B cell (primary cell): ENCODE measurements at regions of chr1 and their contacts with region 1.

Region 1: DNA sequence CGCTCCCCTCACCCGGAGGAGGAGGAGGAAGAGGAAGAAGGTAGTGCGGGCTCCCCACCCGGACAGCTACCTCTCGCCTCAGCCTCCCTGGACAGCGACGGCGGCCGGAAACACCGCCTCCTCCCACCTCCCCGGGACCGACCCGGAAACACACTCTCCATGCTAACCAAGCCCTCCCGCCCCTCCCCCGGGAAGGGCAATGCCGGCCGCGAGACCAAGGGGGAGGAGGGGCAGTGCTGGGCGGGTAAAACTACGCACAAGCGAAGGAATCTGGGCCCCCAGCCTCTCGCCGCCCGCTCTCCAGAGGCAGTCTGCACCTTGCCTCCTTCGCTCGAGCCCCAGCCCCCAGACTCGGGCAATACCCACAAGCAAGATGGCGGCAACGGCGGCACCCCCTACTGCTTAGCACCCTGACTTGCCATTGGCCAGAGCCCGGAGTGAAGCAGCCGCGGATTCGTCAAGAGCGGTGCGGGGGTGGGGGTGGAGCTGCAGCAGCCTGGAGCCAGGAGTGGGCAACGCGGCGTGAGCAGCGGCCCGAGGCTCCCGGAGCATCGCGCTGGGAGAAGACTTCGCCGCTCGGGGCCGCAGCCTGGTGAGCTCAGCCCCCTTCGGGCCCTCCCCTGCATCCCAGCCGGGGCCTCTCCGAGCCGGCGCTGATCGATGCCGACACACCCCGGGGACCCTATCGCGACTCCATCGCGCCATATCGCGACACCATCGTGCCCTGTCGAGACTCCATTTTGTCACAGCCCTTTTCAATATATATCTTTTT is at the starts of genes KIAA0319L and NCDN:
- DNase-seq: peak; percentile 96
- ATAC-seq: peak; percentile 92
- H3K4me3 ChIP-seq: peak within 1 kb of the TSS; percentile 82 to 94 (median 90)
- H3K4me3 Mint-ChIP-seq: peak within 1 kb of the TSS; percentile 98
- H3K27ac ChIP-seq: peak within 1 kb of the TSS; percentile 68 to 82
- H3K27ac Mint-ChIP-seq: peak within 1 kb of the TSS; percentile 99
- H3K4me1 ChIP-seq: peaks cover 15 to 26% of the 10 kb centered on the region in 2 donors
- H3K4me1 Mint-ChIP-seq: peaks cover 41% of the 10 kb centered on the region
- H3K27me3 ChIP-seq: no peaks in the 10 kb centered on the region
- H3K27me3 Mint-ChIP-seq: no peaks in the 10 kb centered on the region
- CTCF ChIP-seq: no peak
- total RNA-seq, gene KIAA0319L: 78.1 and 89.9 TPM in 2 replicates
- total RNA-seq, gene NCDN: 19.8 and 22.6 TPM in 2 replicates

Region 2: GRCh38 chr1:34852677-34853217 is 704.7 kb before region 1 on chr1:
- CTCF ChIA-PET with region 1: interaction called, 4 read pairs
- POLR2A ChIA-PET with region 1: no interaction called
- intact Hi-C with region 1: loop called (anchors 10 kb)
- DNase-seq: peak; percentile 89
- ATAC-seq: peak; percentile 100
- H3K4me3 ChIP-seq: no peak overlapping the region
- H3K4me3 Mint-ChIP-seq: no peak overlapping the region
- H3K27ac ChIP-seq: no peak overlapping the region
- H3K27ac Mint-ChIP-seq: peak overlapping the region; percentile 41
- H3K4me1 ChIP-seq: peaks cover under 1 to 6% of the 10 kb centered on the region in 2 donors
- H3K4me1 Mint-ChIP-seq: peaks cover 16% of the 10 kb centered on the region
- H3K27me3 ChIP-seq: no peaks in the 10 kb centered on the region
- H3K27me3 Mint-ChIP-seq: no peaks in the 10 kb centered on the region
- CTCF ChIP-seq: peak; percentile 92

Region 3: DNA sequence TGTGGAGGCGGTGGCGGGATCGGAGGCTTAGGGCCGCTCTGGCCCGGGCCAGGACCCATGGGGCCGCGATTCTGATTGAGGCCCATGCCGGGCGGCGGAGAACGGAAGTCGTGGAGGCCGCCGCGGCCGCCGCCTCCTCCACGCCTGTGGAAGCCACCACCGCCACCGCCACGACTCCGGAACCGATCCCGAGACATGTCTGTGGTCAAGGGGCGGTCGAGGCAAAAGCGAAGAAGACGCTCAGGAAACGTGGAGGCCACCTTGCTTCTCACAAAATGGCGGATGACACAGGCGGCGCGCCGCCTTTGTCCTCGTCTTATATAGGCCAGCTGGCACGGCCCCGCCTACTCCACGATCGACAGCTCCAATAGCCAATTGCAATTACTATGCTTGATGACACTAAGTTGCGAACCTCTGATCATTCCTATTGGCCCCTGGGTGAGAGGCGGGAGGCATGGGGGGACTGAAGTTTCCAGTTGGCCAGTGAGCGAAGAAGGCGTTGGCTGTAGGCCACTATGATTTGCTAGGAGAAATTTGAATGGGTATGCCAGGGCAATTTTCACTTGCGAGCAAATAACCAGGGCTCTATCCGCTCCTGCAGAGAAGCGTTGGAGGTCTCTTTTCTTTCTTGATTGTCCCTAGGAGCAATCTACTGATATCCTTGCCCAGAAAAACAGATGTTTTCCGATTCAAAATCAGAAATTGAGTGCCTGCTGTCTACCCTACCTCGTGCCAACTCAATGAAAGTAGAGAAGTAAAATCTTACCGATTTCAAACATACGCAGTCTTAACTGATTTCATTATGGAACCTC is 364.4 kb before region 1 on chr1 and contains the start of gene SFPQ:
- CTCF ChIA-PET with region 1: no interaction called
- POLR2A ChIA-PET with region 1: interaction called, 3 read pairs
- intact Hi-C with region 1: loop called (anchors 1 kb)
- DNase-seq: peak; percentile 99
- ATAC-seq: peak; percentile 91
- H3K4me3 ChIP-seq: peak within 1 kb of the TSS; percentile 75 to 97 (median 88)
- H3K4me3 Mint-ChIP-seq: peak within 1 kb of the TSS; percentile 97
- H3K27ac ChIP-seq: peak within 1 kb of the TSS; percentile 95 to 96
- H3K27ac Mint-ChIP-seq: peak within 1 kb of the TSS; percentile 100
- H3K4me1 ChIP-seq: peaks cover 24 to 29% of the 10 kb centered on the region in 2 donors
- H3K4me1 Mint-ChIP-seq: peaks cover 43% of the 10 kb centered on the region
- H3K27me3 ChIP-seq: no peaks in the 10 kb centered on the region
- H3K27me3 Mint-ChIP-seq: no peaks in the 10 kb centered on the region
- CTCF ChIP-seq: no peak
- total RNA-seq, gene SFPQ: 411 and 412 TPM in 2 replicates

Region 4: GRCh38 chr1:35641233-35641866 is 83.9 kb after region 1 on chr1 and contains the start of gene PSMB2:
- CTCF ChIA-PET with region 1: no interaction called
- POLR2A ChIA-PET with region 1: no interaction called
- intact Hi-C with region 1: loop called (anchors 1 kb)
- DNase-seq: peak; percentile 96
- ATAC-seq: peak; percentile 91
- H3K4me3 ChIP-seq: peak within 1 kb of the TSS; percentile 84 to 97 (median 92)
- H3K4me3 Mint-ChIP-seq: peak within 1 kb of the TSS; percentile 100
- H3K27ac ChIP-seq: peak within 1 kb of the TSS; percentile 75 to 76
- H3K27ac Mint-ChIP-seq: peak within 1 kb of the TSS; percentile 98
- H3K4me1 ChIP-seq: peaks cover 14 to 18% of the 10 kb centered on the region in 2 donors
- H3K4me1 Mint-ChIP-seq: peaks cover 39% of the 10 kb centered on the region
- H3K27me3 ChIP-seq: peaks cover 0 to 21% (median 5%) of the 10 kb centered on the region in 4 experiments
- H3K27me3 Mint-ChIP-seq: peaks cover 23% of the 10 kb centered on the region
- CTCF ChIP-seq: no peak
- total RNA-seq, gene PSMB2: 24.8 and 26.2 TPM in 2 replicates

Region 5: DNA sequence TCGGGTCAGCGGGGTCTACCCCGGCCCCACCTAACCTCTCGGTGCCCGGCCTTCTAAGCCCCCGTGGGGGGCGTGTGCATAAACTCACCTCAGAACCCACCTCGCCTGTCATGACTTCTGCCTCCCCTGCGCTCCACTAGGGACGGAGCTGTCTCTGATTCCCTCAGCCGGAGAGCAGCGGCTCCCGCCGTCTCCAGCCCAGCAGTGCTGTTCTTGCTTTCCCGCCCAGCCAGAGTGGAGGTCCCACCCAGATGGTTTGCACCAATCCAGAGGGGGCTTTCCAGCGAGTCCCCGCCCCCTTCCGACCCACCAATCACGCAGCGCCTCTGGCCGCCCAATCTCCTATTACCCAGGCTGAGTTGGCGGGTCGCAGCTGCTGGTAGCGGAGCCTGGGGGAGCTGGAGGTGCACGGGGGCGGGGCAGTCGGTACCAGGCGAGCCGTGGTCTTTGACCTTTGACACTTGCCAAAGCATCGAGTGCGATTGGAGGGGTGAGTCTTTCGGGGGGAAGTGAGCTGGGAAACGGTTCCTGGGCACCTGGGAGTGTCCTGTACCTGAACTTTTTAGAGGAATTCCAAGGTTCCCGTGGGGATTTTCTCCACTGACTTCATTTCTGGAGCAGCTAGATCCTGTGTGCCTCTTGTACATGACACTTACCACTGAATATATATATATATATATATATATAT is 212.4 kb after region 1 on chr1 and contains the start of gene CLSPN:
- CTCF ChIA-PET with region 1: interaction called, 3 read pairs
- POLR2A ChIA-PET with region 1: interaction called, 7 read pairs
- intact Hi-C with region 1: loop called (anchors 1 kb)
- DNase-seq: peak; percentile 94
- ATAC-seq: peak; percentile 95
- H3K4me3 ChIP-seq: peak within 1 kb of the TSS; percentile 75 to 99 (median 87)
- H3K4me3 Mint-ChIP-seq: peak within 1 kb of the TSS; percentile 97
- H3K27ac ChIP-seq: peak within 1 kb of the TSS; percentile 51 to 83
- H3K27ac Mint-ChIP-seq: peak within 1 kb of the TSS; percentile 86
- H3K4me1 ChIP-seq: peaks cover 0 to 12% of the 10 kb centered on the region in 2 donors
- H3K4me1 Mint-ChIP-seq: peaks cover 10% of the 10 kb centered on the region
- H3K27me3 ChIP-seq: no peaks in the 10 kb centered on the region
- H3K27me3 Mint-ChIP-seq: no peaks in the 10 kb centered on the region
- CTCF ChIP-seq: no peak
- total RNA-seq, gene CLSPN: 0.85 and 1.1 TPM in 2 replicates